ENCODE measurements at regions of chr13 and their contacts with region 1.

Region 1: GRCh38 chr13:105428811-105429210 is 1106.7 kb downstream of the EFNB2 start:
- DNase-seq: peak; percentile 66
- ATAC-seq: peak; percentile 72; the same call in 1 of the 2 replicates
- H3K4me3 ChIP-seq: no peak overlapping the region
- H3K27ac ChIP-seq: no peak overlapping the region
- H3K4me1 ChIP-seq: no peaks in the 10 kb centered on the region
- H3K27me3 ChIP-seq: no peaks in the 10 kb centered on the region
- CTCF ChIP-seq: no peak
- POLR2A ChIP-seq: no peak
- RAD21 ChIP-seq: no peak

Region 2: DNA sequence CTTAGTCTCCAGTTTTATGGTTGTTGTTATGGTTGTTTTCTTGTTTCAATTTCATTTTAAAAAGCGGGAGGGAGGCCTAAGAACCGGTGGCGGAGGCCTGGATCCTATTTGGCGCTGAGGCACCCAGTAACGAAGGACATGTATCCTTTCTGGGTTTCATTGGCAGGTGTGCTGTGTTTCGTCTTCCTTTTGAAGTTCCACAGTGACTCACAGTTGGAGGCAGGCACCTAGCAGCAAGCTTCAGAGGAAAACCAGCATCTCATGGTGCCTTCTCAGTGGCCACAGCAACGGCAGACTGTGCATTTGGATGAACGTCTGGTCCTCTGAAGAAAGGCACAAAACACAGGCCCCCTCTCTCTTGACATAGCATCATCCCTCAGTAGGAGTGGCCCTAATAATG is 409.4 kb after region 1 on chr13:
- CTCF ChIA-PET with region 1: no interaction called
- POLR2A ChIA-PET with region 1: no interaction called
- dilution Hi-C with region 1: no loop called
- in situ Hi-C with region 1: no loop called
- intact Hi-C with region 1: no loop called
- DNase-seq: no peak
- ATAC-seq: no peak
- H3K4me3 ChIP-seq: no peak overlapping the region
- H3K27ac ChIP-seq: no peak overlapping the region
- H3K4me1 ChIP-seq: no peaks in the 10 kb centered on the region
- H3K27me3 ChIP-seq: no peaks in the 10 kb centered on the region
- CTCF ChIP-seq: no peak
- POLR2A ChIP-seq: no peak
- RAD21 ChIP-seq: no peak

Region 3: DNA sequence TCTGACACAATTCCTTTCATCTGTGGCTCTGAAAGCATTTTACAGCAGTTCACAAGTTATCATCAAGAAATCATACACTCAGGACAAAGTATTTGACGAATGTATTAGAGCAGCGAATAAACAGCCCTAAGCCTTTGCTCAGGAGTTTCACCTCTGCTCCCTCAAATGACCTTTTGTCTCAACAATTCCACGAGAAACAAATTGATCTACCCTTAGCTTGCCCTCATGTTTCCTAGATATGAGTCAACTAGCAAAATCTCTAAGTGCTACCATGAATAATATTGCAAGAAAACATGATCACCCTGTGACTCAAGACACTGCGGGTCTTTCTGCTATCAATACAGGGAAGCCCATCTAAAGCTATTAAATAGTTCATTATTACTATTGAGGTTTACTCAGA is 710.6 kb after region 1 on chr13:
- CTCF ChIA-PET with region 1: no interaction called
- POLR2A ChIA-PET with region 1: interaction called, 10 read pairs
- dilution Hi-C with region 1: no loop called
- in situ Hi-C with region 1: no loop called
- intact Hi-C with region 1: no loop called
- DNase-seq: peak; percentile 38
- ATAC-seq: peak; percentile 41; the same call in 1 of the 2 replicates
- H3K4me3 ChIP-seq: no peak overlapping the region
- H3K27ac ChIP-seq: no peak overlapping the region
- H3K4me1 ChIP-seq: peaks cover 6% of the 10 kb centered on the region
- H3K27me3 ChIP-seq: no peaks in the 10 kb centered on the region
- CTCF ChIP-seq: no peak
- POLR2A ChIP-seq: no peak
- RAD21 ChIP-seq: no peak